MCF 10A (cell line): ENCODE measurements at regions of chr12 and their contacts with region 1.

Region 1: DNA sequence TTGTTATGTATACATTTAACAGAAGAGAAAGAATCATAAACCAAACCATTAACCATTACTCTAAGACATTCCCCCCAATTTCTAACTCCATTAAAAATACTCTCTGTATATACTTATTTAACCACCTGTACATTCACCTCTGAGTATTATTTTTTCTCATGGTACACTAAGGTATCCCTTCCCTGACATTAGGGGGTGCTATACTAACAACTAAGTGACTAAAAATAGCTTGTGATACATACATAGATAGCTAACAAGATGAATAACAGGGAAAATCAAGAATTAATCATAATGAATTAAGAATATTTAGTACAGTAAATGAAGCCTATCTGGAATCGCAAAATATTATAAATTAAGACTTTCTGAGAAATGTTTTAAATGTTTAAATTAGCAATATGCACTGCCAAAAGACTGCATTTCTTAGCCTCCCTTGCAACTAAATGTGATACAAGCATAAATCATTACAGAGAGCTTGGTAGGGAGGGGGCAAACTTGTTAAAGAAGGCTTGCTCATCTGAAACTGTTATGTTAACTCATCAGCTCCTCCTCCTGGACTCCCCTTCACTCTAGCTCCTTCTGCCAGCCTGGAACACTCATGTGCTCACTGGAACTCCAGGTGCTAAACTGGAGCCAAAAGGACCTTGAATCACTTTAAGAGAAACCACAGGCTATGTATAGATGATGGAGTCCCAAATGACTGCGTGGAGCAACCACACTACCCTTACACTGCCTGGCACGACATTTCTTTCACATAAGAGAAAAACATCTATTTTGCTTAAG is 14.9 kb downstream of the C2CD5 start:
- DNase-seq: peak; percentile 48
- H3K4me3 Mint-ChIP-seq: no peak overlapping the region
- H3K27ac Mint-ChIP-seq: no peak overlapping the region
- H3K4me1 Mint-ChIP-seq: peaks cover 7% of the 10 kb centered on the region
- H3K27me3 Mint-ChIP-seq: no peaks in the 10 kb centered on the region
- CTCF ChIP-seq: peak; percentile 13

Region 2: GRCh38 chr12:22544038-22544979 is 14.8 kb after region 1 on chr12 and contains the start of gene C2CD5:
- CTCF ChIA-PET with region 1: interaction called, 15 read pairs
- POLR2A ChIA-PET with region 1: interaction called, 5 read pairs
- intact Hi-C with region 1: no loop called
- DNase-seq: peak; percentile 97
- H3K4me3 Mint-ChIP-seq: peak within 1 kb of the TSS; percentile 86
- H3K27ac Mint-ChIP-seq: peak within 1 kb of the TSS; percentile 84
- H3K4me1 Mint-ChIP-seq: peaks cover 23% of the 10 kb centered on the region
- H3K27me3 Mint-ChIP-seq: no peaks in the 10 kb centered on the region
- CTCF ChIP-seq: peak; percentile 27
- total RNA-seq, gene C2CD5: 16.9 and 21.4 TPM in 2 replicates

Region 3: DNA sequence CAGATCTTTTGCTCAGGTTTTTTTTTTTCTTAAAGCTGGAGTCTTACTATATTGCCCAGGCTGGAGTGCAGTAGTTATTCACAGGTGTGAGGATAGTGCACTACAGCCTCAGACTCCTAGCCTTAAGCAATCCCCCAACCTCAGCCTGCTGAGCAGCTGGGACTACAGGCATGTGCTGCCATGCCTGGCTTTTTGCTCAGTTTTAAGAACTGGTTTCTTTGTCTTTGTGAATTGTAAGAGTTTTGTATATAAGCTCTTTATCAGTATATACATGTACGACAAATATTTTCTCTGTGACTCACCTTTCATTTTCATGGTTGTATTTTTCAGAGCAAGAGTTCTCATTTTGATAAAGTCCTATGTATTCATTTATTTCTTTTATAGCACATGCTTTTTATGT is 48.2 kb after region 1 on chr12:
- CTCF ChIA-PET with region 1: no interaction called
- POLR2A ChIA-PET with region 1: no interaction called
- intact Hi-C with region 1: no loop called
- DNase-seq: no peak
- H3K4me3 Mint-ChIP-seq: no peak overlapping the region
- H3K27ac Mint-ChIP-seq: no peak overlapping the region
- H3K4me1 Mint-ChIP-seq: no peaks in the 10 kb centered on the region
- H3K27me3 Mint-ChIP-seq: no peaks in the 10 kb centered on the region
- CTCF ChIP-seq: no peak